ENCODE measurements at regions of chr11 and their contacts with region 1.

Region 1: DNA sequence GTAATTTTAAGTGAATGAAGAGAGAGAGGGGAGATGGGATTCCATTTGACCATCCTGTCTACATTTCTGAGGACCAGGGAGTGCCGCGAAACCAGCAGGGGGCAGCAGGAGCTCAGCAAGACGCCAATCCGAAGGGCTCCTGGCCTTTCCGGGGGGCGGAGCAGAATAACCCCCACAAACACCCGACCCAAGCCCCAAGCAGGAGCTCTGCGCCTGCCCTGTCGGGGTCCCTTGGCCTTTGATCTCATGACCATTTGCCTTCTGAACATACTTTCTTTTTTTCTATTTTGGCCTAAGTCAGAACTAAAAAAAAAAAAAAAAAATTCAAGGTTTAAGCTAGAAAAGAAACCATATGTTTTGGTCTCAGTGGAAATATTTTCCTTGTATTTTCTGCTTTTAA is 21.9 kb upstream of the SCN2B start:
- DNase-seq: peak; percentile 90
- ATAC-seq: peak; percentile 31
- H3K4me3 Mint-ChIP-seq: peak overlapping the region; percentile 43
- H3K27ac Mint-ChIP-seq: peak overlapping the region; percentile 72
- H3K4me1 Mint-ChIP-seq: peaks cover 17% of the 10 kb centered on the region
- H3K27me3 Mint-ChIP-seq: no peaks in the 10 kb centered on the region

Region 2: GRCh38 chr11:117979481-117980211 is 218.7 kb before region 1 on chr11:
- CTCF ChIA-PET with region 1: no interaction called
- POLR2A ChIA-PET with region 1: no interaction called
- DNase-seq: no peak
- ATAC-seq: peak; percentile 32
- H3K4me3 Mint-ChIP-seq: no peak overlapping the region
- H3K27ac Mint-ChIP-seq: peak overlapping the region; percentile 81
- H3K4me1 Mint-ChIP-seq: peaks cover 81% of the 10 kb centered on the region
- H3K27me3 Mint-ChIP-seq: no peaks in the 10 kb centered on the region

Region 3: GRCh38 chr11:118046051-118046963 is 152.1 kb before region 1 on chr11:
- CTCF ChIA-PET with region 1: no interaction called
- POLR2A ChIA-PET with region 1: no interaction called
- DNase-seq: peak; percentile 50
- ATAC-seq: peak; percentile 76
- H3K4me3 Mint-ChIP-seq: peak overlapping the region; percentile 9
- H3K27ac Mint-ChIP-seq: peak overlapping the region; percentile 77
- H3K4me1 Mint-ChIP-seq: peaks cover 91% of the 10 kb centered on the region
- H3K27me3 Mint-ChIP-seq: no peaks in the 10 kb centered on the region

Region 4: DNA sequence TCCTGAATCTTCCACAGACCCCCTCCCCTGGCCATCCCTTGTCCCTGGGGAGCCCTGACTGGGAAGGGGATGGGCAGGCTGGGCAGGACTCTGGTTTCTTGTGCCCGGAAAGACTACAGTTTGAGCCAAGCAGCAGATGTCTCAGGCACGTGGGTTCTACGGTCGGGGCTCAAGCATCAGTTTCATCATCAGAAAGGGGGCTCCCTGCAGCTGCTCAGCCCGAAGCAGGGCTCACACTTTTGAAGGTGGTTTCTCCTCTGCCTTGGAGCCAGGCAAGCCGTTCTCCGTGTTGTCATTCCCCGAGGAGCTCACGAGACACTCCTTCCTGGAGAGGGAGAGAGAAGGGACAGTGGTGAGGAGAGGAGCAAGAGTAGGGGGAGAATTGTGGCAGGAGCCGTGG is 61.6 kb before region 1 on chr11:
- CTCF ChIA-PET with region 1: no interaction called
- POLR2A ChIA-PET with region 1: no interaction called
- DNase-seq: no peak
- ATAC-seq: no peak
- H3K4me3 Mint-ChIP-seq: no peak overlapping the region
- H3K27ac Mint-ChIP-seq: no peak overlapping the region
- H3K4me1 Mint-ChIP-seq: no peaks in the 10 kb centered on the region
- H3K27me3 Mint-ChIP-seq: peaks cover 38% of the 10 kb centered on the region

Region 5: DNA sequence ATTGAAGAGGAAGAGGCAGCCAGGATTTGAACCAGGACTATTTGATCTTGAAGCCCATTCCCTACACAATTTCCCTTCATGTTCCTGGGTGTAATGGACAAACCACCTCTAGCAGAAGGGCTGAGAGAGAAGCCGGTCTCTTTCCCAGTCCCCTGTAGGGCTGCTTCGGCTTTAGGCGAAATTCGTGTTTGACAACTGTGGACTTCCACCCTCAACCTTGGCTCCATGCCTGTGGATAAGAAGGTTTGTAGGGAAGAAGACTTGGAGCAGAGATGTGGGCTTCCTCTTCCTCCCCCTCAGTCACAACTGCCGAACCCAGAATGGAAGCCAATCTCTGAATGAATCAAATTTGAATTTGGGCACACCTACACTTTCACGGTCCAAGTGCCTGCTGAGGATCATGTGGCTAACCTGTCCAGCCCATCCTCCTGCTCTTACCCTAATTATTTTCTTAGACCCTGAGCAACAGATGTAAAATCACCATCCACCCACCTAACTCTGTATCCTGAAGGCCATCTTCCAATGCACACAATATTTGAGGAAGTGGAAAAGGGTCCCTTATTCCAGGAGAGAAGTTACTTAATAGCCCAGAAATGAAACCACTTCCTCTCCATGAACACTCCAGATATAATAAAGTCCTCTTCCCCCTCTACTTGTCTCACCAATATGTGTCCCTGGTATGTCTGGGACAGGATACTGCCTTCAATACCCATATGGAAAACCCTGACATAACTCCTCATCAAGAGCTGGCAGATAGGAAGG is 11.8 kb before region 1 on chr11:
- CTCF ChIA-PET with region 1: interaction called, 13 read pairs
- POLR2A ChIA-PET with region 1: no interaction called
- DNase-seq: no peak
- ATAC-seq: no peak
- H3K4me3 Mint-ChIP-seq: no peak overlapping the region
- H3K27ac Mint-ChIP-seq: no peak overlapping the region
- H3K4me1 Mint-ChIP-seq: peaks cover 3% of the 10 kb centered on the region
- H3K27me3 Mint-ChIP-seq: peaks cover 31% of the 10 kb centered on the region

Region 6: GRCh38 chr11:118240999-118241768 is 42.8 kb after region 1 on chr11:
- CTCF ChIA-PET with region 1: interaction called, 35 read pairs
- POLR2A ChIA-PET with region 1: interaction called, 6 read pairs
- DNase-seq: peak; percentile 81
- ATAC-seq: peak; percentile 89
- H3K4me3 Mint-ChIP-seq: peak overlapping the region; percentile 71
- H3K27ac Mint-ChIP-seq: peak overlapping the region; percentile 88
- H3K4me1 Mint-ChIP-seq: peaks cover 92% of the 10 kb centered on the region
- H3K27me3 Mint-ChIP-seq: no peaks in the 10 kb centered on the region

Region 7: DNA sequence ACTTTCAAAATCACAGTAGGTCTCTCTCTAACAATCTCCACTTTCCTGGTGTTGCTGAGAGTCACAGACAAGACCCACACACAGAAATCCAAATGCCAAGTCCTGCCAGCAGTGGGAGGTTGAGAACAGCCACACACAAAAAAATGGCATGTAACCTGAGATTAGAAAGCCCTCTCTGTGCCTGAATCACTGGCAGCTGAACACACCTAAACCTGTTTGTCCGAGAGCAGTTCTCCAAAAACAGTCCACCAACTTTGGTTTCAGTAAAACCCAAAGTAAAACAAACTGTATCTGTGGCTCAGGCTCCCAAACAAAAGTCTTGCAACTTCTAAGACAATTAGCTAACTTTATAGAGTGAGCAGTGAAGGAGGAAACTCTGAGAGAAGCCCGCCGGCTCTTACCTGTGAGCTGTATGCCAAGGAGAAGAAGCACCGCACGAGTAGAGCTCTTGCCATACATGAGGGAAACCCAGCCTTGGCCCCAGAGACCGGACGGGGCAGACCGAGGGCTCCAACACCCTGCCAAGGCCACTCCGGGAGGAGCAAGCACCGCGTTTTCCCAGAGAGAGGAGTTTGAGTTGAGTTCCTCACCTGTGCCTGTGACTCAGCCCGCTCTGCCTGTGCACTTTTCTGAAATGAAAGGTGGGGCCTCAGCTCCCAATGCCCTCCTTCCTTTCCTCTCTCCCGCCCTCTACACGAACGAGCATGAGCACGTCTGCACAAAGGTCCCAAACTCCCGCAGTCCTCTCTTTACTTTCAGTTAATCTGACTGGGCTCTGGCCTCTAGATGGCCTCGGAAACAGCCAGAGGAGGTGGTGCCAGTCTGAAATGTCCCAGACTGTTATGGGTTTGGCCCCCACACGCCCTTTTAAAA is 65.6 kb after region 1 on chr11 and contains the start of gene MPZL2:
- CTCF ChIA-PET with region 1: interaction called, 74 read pairs
- POLR2A ChIA-PET with region 1: interaction called, 3 read pairs
- DNase-seq: peak; percentile 55
- ATAC-seq: peak; percentile 73
- H3K4me3 Mint-ChIP-seq: peak within 1 kb of the TSS; percentile 77
- H3K27ac Mint-ChIP-seq: peak within 1 kb of the TSS; percentile 23
- H3K4me1 Mint-ChIP-seq: peaks cover 65% of the 10 kb centered on the region
- H3K27me3 Mint-ChIP-seq: peaks cover 3% of the 10 kb centered on the region
- total RNA-seq, gene MPZL2: 11.7 to 12.2 TPM

Region 8: GRCh38 chr11:118295834-118296454 is 97.6 kb after region 1 on chr11:
- CTCF ChIA-PET with region 1: interaction called, 39 read pairs
- POLR2A ChIA-PET with region 1: interaction called, 4 read pairs
- DNase-seq: peak; percentile 62
- ATAC-seq: peak; percentile 64
- H3K4me3 Mint-ChIP-seq: no peak overlapping the region
- H3K27ac Mint-ChIP-seq: no peak overlapping the region
- H3K4me1 Mint-ChIP-seq: peaks cover 22% of the 10 kb centered on the region
- H3K27me3 Mint-ChIP-seq: no peaks in the 10 kb centered on the region

Region 9: GRCh38 chr11:118343981-118344515 is 145.7 kb after region 1 on chr11 and contains the start of gene CD3G:
- CTCF ChIA-PET with region 1: interaction called, 20 read pairs
- POLR2A ChIA-PET with region 1: interaction called, 7 read pairs
- DNase-seq: peak; percentile 86
- ATAC-seq: peak; percentile 76
- H3K4me3 Mint-ChIP-seq: peak within 1 kb of the TSS; percentile 84
- H3K27ac Mint-ChIP-seq: peak within 1 kb of the TSS; percentile 96
- H3K4me1 Mint-ChIP-seq: peaks cover 61% of the 10 kb centered on the region
- H3K27me3 Mint-ChIP-seq: no peaks in the 10 kb centered on the region
- total RNA-seq, gene CD3G: 227 to 232 TPM